B cell (primary cell): ENCODE measurements at regions of chr17 and their contacts with region 1.

Region 1: GRCh38 chr17:75896415-75897159 is at the start of gene TRIM65:
- DNase-seq: peak; percentile 86
- ATAC-seq: peak; percentile 86
- H3K4me3 ChIP-seq: peak within 1 kb of the TSS; percentile 14 to 80 (median 76)
- H3K4me3 Mint-ChIP-seq: peak within 1 kb of the TSS; percentile 85
- H3K27ac ChIP-seq: peak within 1 kb of the TSS; percentile 34 to 49
- H3K27ac Mint-ChIP-seq: peak within 1 kb of the TSS; percentile 82
- H3K4me1 ChIP-seq: peaks cover 16 to 19% of the 10 kb centered on the region in 2 donors
- H3K4me1 Mint-ChIP-seq: peaks cover 26% of the 10 kb centered on the region
- H3K27me3 ChIP-seq: no peaks in the 10 kb centered on the region
- H3K27me3 Mint-ChIP-seq: no peaks in the 10 kb centered on the region
- CTCF ChIP-seq: peak; percentile 41
- total RNA-seq, gene TRIM65: 39.2 and 40.7 TPM in 2 replicates

Region 2: DNA sequence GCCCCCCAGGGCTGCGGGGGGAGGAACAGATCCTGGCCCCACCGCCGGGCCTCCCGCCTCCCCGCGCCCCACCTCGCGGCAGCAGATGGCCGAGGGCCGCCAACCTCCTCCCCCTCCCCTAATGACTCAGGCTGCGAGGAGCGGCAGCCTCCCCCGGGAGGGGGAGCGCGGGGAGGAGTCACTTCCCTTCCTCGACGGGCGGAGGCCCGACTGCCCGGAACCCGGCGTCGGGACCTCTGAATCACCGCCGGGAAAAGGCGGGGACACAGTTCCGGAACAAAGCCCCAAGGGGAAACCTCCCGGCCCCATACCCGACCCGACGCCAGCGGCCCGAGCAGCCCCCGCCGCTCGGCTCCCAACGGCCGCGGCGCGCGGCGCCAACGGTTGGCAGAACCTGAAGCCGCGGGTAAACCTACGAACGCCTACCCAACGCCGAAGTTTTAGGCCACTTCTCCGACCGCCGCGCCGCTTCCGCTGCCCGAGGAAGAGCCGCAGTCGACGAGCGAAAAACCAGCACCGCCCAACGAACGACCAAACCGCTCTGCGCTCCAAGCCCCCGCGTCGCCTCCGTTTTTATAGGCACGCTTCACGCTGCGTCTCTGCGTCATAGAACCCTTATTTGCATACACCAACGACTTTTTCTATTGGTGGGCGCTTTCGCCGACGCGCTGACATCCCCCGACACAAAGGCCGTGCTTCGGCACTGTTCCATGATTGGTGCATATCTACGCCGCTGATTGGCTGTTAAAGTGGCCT is 117.2 kb before region 1 on chr17:
- CTCF ChIA-PET with region 1: interaction called, 3 read pairs
- POLR2A ChIA-PET with region 1: interaction called, 10 read pairs
- intact Hi-C with region 1: no loop called
- DNase-seq: peak; percentile 99
- ATAC-seq: peak; percentile 62
- H3K4me3 ChIP-seq: peak overlapping the region; percentile 89 to 95 (median 95)
- H3K4me3 Mint-ChIP-seq: peak overlapping the region; percentile 94
- H3K27ac ChIP-seq: peak overlapping the region; percentile 88 to 97
- H3K27ac Mint-ChIP-seq: peak overlapping the region; percentile 99
- H3K4me1 ChIP-seq: peaks cover 36 to 59% of the 10 kb centered on the region in 2 donors
- H3K4me1 Mint-ChIP-seq: peaks cover 63% of the 10 kb centered on the region
- H3K27me3 ChIP-seq: no peaks in the 10 kb centered on the region
- H3K27me3 Mint-ChIP-seq: no peaks in the 10 kb centered on the region
- CTCF ChIP-seq: no peak

Region 3: DNA sequence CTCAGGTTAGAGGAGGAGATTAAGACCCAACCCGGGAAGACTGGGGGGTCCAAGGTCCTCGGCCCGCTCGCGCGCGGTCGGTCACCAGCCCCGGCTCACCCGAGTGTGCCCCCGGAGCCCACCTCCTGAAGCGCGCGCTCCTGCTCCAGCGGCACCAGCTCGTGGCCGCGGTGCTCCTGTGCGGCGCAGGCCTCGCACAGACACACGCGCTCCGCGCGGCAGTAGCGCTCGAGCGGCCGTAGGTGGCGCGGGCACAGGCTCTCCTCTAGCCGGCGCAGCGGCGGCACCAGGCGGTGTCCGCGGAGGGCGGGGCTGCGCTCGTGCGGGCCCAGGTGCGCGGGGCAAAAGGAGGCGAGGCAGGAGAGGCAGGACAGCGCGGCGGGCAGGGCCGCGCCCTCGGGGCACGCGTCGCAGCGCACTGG is 18.8 kb before region 1 on chr17:
- CTCF ChIA-PET with region 1: interaction called, 52 read pairs
- POLR2A ChIA-PET with region 1: interaction called, 5 read pairs
- intact Hi-C with region 1: loop called (anchors 1 kb)
- DNase-seq: peak; percentile 87
- ATAC-seq: peak; percentile 77
- H3K4me3 ChIP-seq: peak overlapping the region in 4 of 5 experiments; percentile 46 to 69 (median 52)
- H3K4me3 Mint-ChIP-seq: peak overlapping the region; percentile 90
- H3K27ac ChIP-seq: peak overlapping the region; percentile 44 to 55
- H3K27ac Mint-ChIP-seq: peak overlapping the region; percentile 91
- H3K4me1 ChIP-seq: peaks cover 30 to 39% of the 10 kb centered on the region in 2 donors
- H3K4me1 Mint-ChIP-seq: peaks cover 35% of the 10 kb centered on the region
- H3K27me3 ChIP-seq: peaks cover 0 to 7% (median 1%) of the 10 kb centered on the region in 4 experiments
- H3K27me3 Mint-ChIP-seq: peaks cover 4% of the 10 kb centered on the region
- CTCF ChIP-seq: peak; percentile 73

Region 4: DNA sequence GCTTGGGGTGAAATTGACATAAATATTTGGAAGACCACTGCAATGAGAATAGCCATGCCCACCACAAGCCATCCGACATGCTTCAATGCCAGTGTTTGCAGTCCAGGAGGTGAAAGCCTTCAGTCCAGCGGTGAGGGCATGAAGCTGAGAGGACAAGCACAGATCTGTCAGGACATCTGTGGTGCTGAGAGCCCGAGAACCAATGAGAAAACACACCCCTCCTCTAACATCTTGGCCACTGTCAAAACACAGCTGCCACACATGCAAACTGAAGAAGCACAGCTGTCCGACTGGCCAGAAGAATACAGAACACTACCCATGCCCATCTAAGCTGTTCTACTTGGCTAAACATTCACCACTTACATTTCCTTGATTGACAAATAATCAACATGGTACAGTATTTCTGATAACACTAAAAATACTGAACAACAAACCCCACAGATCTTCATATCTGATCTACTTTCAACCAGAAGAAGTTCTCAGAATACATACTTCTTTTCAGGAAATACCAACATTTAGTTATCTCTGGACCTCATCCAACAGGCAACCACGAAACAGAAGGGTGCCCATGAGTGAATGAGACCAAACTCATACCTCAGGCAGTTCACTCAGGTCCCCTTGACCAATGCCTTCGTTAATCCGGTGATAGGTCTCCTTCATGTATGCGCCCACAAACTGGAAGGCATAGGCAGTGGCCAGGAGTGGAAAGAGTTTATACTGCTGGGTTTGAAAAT is 54.4 kb after region 1 on chr17:
- CTCF ChIA-PET with region 1: no interaction called
- POLR2A ChIA-PET with region 1: no interaction called
- intact Hi-C with region 1: no loop called
- DNase-seq: no peak
- ATAC-seq: no peak
- H3K4me3 ChIP-seq: no peak overlapping the region
- H3K4me3 Mint-ChIP-seq: no peak overlapping the region
- H3K27ac ChIP-seq: no peak overlapping the region
- H3K27ac Mint-ChIP-seq: no peak overlapping the region
- H3K4me1 ChIP-seq: no peaks in the 10 kb centered on the region
- H3K4me1 Mint-ChIP-seq: no peaks in the 10 kb centered on the region
- H3K27me3 ChIP-seq: no peaks in the 10 kb centered on the region
- H3K27me3 Mint-ChIP-seq: no peaks in the 10 kb centered on the region
- CTCF ChIP-seq: no peak